Caco-2 (cell line): ENCODE measurements at regions of chr22 and their contacts with region 1.

Region 1: DNA sequence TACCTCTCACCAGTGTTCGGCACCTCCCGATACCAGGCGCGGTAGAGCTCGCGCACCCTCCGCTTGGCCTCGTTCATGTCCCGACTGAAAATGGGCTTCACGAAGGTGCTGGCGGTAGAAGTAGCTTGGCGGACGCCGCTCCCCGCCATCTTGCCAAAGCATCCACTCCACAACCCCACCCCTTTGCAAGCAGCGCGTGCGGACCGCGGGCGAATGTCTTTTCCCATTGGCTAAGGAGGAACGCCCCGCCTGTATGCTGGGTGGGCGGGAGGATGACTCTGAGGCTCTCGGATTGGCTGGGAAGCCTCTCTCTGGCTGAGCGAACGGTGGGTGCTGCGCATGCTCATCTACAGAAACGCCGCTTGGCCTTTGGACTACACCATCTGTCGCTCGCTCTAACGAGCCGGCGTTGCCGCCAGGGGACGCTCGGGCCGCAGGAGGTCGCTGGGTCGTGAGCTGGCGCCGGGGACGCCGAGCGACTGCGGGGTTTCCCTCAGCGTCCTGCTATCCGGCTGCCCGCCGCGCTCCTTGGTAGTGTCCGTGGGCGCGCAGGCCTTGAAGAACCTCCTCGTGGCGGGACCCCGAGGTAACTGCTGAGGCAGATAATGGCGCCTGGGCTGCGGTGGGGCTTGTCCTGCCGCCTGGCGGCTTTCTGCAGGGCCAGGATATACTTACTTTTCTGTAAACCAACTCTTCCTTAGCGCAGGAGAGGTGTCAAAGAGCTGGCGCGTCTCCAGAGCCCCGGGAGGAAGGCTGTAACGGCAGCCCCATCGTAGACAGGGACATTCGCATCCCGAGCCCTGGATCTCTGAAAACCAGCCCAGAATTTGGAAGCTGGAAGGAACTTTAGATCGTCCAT is at the start of gene NDUFA6:
- DNase-seq: peak; percentile 98 to 99
- H3K4me3 ChIP-seq: peak within 1 kb of the TSS; percentile 94
- H3K4me3 Mint-ChIP-seq: peak within 1 kb of the TSS; percentile 93
- H3K27ac Mint-ChIP-seq: peak within 1 kb of the TSS; percentile 99
- H3K4me1 ChIP-seq: no peaks in the 10 kb centered on the region
- H3K4me1 Mint-ChIP-seq: peaks cover 9% of the 10 kb centered on the region
- H3K27me3 ChIP-seq: no peaks in the 10 kb centered on the region
- H3K27me3 Mint-ChIP-seq: no peaks in the 10 kb centered on the region
- CTCF ChIP-seq: peak; percentile 67 to 96
- total RNA-seq, gene NDUFA6: 119 and 124 TPM in 2 replicates

Region 2: GRCh38 chr22:41966607-41967240 is 124.1 kb before region 1 on chr22:
- CTCF ChIA-PET with region 1: no interaction called
- POLR2A ChIA-PET with region 1: no interaction called
- intact Hi-C with region 1: loop called (anchors 1 kb)
- DNase-seq: peak; percentile 48 to 54
- H3K4me3 ChIP-seq: no peak overlapping the region
- H3K4me3 Mint-ChIP-seq: no peak overlapping the region
- H3K27ac Mint-ChIP-seq: no peak overlapping the region
- H3K4me1 ChIP-seq: no peaks in the 10 kb centered on the region
- H3K4me1 Mint-ChIP-seq: no peaks in the 10 kb centered on the region
- H3K27me3 ChIP-seq: no peaks in the 10 kb centered on the region
- H3K27me3 Mint-ChIP-seq: no peaks in the 10 kb centered on the region
- CTCF ChIP-seq: peak in 1 of 2 experiments; percentile 41

Region 3: GRCh38 chr22:42079319-42080251 is 11.2 kb before region 1 on chr22 and contains the start of gene SMDT1:
- CTCF ChIA-PET with region 1: interaction called, 11 read pairs
- POLR2A ChIA-PET with region 1: interaction called, 15 read pairs
- intact Hi-C with region 1: loop called (anchors 1 kb)
- DNase-seq: peak; percentile 98 to 99
- H3K4me3 ChIP-seq: peak within 1 kb of the TSS; percentile 94
- H3K4me3 Mint-ChIP-seq: peak within 1 kb of the TSS; percentile 96
- H3K27ac Mint-ChIP-seq: peak within 1 kb of the TSS; percentile 93
- H3K4me1 ChIP-seq: peaks cover 14% of the 10 kb centered on the region
- H3K4me1 Mint-ChIP-seq: peaks cover 10% of the 10 kb centered on the region
- H3K27me3 ChIP-seq: no peaks in the 10 kb centered on the region
- H3K27me3 Mint-ChIP-seq: no peaks in the 10 kb centered on the region
- CTCF ChIP-seq: no peak
- total RNA-seq, gene SMDT1: 65.7 and 68.6 TPM in 2 replicates

Region 4: DNA sequence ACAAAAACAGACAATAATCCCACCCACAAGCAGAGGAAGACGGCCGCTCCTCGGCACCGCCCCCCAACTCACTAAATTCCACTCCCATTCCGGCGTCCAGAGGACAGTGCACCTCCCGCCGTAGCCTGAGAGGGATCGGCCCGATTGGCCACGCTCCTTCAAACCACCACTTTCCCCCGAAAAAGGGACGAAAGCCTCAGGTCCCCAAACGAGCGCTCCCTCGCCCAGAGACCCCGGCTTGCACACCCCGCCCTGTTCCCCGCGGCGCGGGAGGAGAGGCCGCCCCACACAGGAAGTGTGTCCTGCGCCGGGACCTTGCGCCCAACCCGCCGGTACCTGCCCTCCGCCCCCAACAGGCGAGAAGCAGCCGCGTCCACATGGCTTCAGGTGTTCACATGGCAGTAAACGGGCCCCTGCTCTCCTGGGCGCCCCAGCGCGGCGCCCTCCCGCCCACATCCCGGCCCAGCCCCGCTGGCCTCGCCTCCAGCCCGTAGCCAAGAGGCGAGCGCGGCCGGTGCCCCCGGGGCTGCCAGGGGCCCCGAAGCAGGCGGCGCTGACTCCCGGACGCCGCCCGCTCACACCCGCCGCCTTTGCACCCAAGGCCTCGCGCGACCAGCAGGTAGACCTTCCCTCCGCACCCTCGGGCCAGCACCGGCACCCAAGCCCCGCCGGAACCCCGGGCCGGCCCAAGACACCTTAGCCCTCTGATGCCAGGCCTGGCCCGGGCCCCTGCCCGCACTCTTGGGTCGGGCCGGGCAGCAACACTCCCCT is 178.8 kb after region 1 on chr22:
- CTCF ChIA-PET with region 1: no interaction called
- POLR2A ChIA-PET with region 1: no interaction called
- intact Hi-C with region 1: loop called (anchors 10 kb)
- DNase-seq: peak; percentile 87 to 88
- H3K4me3 ChIP-seq: peak overlapping the region; percentile 97
- H3K4me3 Mint-ChIP-seq: peak overlapping the region; percentile 95
- H3K27ac Mint-ChIP-seq: peak overlapping the region; percentile 79
- H3K4me1 ChIP-seq: peaks cover 16% of the 10 kb centered on the region
- H3K4me1 Mint-ChIP-seq: peaks cover 16% of the 10 kb centered on the region
- H3K27me3 ChIP-seq: no peaks in the 10 kb centered on the region
- H3K27me3 Mint-ChIP-seq: no peaks in the 10 kb centered on the region
- CTCF ChIP-seq: peak in 1 of 2 experiments; percentile 39

Region 5: GRCh38 chr22:42437488-42438292 is 346.9 kb after region 1 on chr22:
- CTCF ChIA-PET with region 1: interaction called, 4 read pairs
- POLR2A ChIA-PET with region 1: no interaction called
- intact Hi-C with region 1: loop called (anchors 1 kb)
- DNase-seq: peak; percentile 76 to 87
- H3K4me3 ChIP-seq: peak overlapping the region; percentile 42
- H3K4me3 Mint-ChIP-seq: peak overlapping the region; percentile 71
- H3K27ac Mint-ChIP-seq: peak overlapping the region; percentile 53
- H3K4me1 ChIP-seq: no peaks in the 10 kb centered on the region
- H3K4me1 Mint-ChIP-seq: no peaks in the 10 kb centered on the region
- H3K27me3 ChIP-seq: no peaks in the 10 kb centered on the region
- H3K27me3 Mint-ChIP-seq: no peaks in the 10 kb centered on the region
- CTCF ChIP-seq: peak; percentile 95